ENCODE measurements at regions of chr22 and their contacts with region 1.

Region 1: DNA sequence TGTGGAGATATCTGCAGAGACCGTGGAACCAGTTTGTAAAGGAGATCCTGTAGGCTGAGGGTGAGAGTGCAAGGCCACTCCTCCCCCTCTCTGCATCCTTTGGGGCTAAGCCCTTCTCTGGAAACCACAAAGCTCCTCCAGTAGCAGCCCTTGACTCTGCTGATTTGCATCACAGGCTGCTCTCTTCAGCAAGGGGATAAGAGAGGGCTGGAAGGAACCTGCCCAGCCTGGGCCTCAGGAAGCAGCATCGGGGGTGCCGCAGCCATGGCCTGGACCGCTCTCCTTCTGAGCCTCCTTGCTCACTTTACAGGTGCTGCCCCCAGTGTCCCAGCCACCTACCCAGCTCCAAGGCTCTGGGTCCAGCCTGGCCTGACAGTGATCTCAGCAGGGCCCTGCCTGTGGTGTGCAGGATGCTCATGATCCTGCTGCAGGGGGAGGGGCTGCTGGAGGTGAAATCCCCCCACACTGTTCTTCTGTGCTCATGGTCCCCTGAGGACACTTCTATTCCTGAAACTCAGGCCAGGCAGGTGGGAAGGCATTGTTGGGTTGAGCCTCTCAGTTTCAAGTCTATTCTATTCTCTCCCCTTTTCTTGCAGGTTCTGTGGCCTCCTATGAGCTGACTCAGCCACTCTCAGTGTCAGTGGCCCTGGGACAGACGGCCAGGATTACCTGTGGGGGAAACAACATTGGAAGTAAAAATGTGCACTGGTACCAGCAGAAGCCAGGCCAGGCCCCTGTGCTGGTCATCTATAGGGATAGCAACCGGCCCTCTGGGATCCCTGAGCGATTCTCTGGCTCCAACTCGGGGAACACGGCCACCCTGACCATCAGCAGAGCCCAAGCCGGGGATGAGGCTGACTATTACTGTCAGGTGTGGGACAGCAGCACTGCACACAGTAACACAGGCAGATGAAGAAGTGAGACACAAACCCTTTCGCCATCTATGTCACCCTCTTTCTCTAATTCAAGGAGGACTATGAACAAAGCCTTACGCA is 68.5 kb upstream of the IGLL5 start:
- DNase-seq: peak; percentile 56 to 59 (median 58)
- H3K4me3 ChIP-seq: peak overlapping the region in 1 of 2 donors; percentile 62
- H3K4me3 Mint-ChIP-seq: peak overlapping the region; percentile 76 to 91 (median 81)
- H3K27ac ChIP-seq: peak overlapping the region; percentile 58
- H3K27ac Mint-ChIP-seq: peak overlapping the region; percentile 88 to 97 (median 96)
- H3K4me1 ChIP-seq: peaks cover 96% of the 10 kb centered on the region
- H3K4me1 Mint-ChIP-seq: peaks cover 84 to 99% (median 94%) of the 10 kb centered on the region in 4 donors
- H3K27me3 ChIP-seq: no peaks in the 10 kb centered on the region
- H3K27me3 Mint-ChIP-seq: no peaks in the 10 kb centered on the region

Region 2: GRCh38 chr22:22830193-22830592 is 11.0 kb after region 1 on chr22:
- CTCF ChIA-PET with region 1: interaction called, 4 read pairs
- POLR2A ChIA-PET with region 1: interaction called, 24 read pairs
- intact Hi-C with region 1: no loop called
- DNase-seq: no peak
- H3K4me3 ChIP-seq: no peak overlapping the region
- H3K4me3 Mint-ChIP-seq: no peak overlapping the region
- H3K27ac ChIP-seq: no peak overlapping the region
- H3K27ac Mint-ChIP-seq: no peak overlapping the region
- H3K4me1 ChIP-seq: peaks cover 4% of the 10 kb centered on the region
- H3K4me1 Mint-ChIP-seq: peaks cover 11 to 21% (median 16%) of the 10 kb centered on the region in 4 donors
- H3K27me3 ChIP-seq: no peaks in the 10 kb centered on the region
- H3K27me3 Mint-ChIP-seq: no peaks in the 10 kb centered on the region

Region 3: DNA sequence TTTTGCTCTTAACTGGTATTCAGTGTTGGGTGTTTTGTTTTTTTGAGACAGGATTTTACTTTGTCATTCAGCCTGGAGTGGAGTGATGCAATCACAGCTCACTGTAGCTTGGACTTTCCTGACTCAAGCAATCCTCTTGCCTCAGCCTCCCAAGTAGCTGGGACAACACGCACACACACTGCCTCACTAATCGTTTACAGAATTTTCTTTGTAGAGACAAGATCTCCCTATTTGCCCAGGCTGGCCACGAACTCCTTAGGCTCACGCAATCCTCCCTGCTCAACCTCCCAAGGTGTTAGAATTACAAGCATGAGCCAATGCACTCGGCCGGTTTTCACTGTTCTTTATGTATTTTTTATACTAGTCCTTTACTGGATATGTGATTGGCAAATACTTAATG is 17.5 kb after region 1 on chr22:
- CTCF ChIA-PET with region 1: interaction called, 4 read pairs
- POLR2A ChIA-PET with region 1: interaction called, 29 read pairs
- intact Hi-C with region 1: no loop called
- DNase-seq: no peak
- H3K4me3 ChIP-seq: no peak overlapping the region
- H3K4me3 Mint-ChIP-seq: no peak overlapping the region
- H3K27ac ChIP-seq: no peak overlapping the region
- H3K27ac Mint-ChIP-seq: no peak overlapping the region
- H3K4me1 ChIP-seq: peaks cover 13% of the 10 kb centered on the region
- H3K4me1 Mint-ChIP-seq: peaks cover 14 to 29% (median 21%) of the 10 kb centered on the region in 4 donors
- H3K27me3 ChIP-seq: no peaks in the 10 kb centered on the region
- H3K27me3 Mint-ChIP-seq: no peaks in the 10 kb centered on the region

Region 4: GRCh38 chr22:22865311-22866072 is 46.3 kb after region 1 on chr22:
- CTCF ChIA-PET with region 1: interaction called, 5 read pairs
- POLR2A ChIA-PET with region 1: interaction called, 36 read pairs
- intact Hi-C with region 1: no loop called
- DNase-seq: peak; percentile 53 to 71 (median 59)
- H3K4me3 ChIP-seq: no peak overlapping the region
- H3K4me3 Mint-ChIP-seq: peak overlapping the region in 7 of 8 donors; percentile 33 to 67 (median 51)
- H3K27ac ChIP-seq: no peak overlapping the region
- H3K27ac Mint-ChIP-seq: peak overlapping the region; percentile 50 to 95 (median 83)
- H3K4me1 ChIP-seq: peaks cover 35% of the 10 kb centered on the region
- H3K4me1 Mint-ChIP-seq: peaks cover 35 to 55% (median 41%) of the 10 kb centered on the region in 4 donors
- H3K27me3 ChIP-seq: no peaks in the 10 kb centered on the region
- H3K27me3 Mint-ChIP-seq: no peaks in the 10 kb centered on the region

Measured in CD4-positive, alpha-beta memory T cell (primary cell).